ENCODE measurements at regions of chr6 and their contacts with region 1.

Region 1: GRCh38 chr6:138428944-138429598 is 25.0 kb downstream of the HEBP2 start:
- DNase-seq: peak; percentile 70
- H3K4me3 ChIP-seq: no peak overlapping the region
- H3K27ac ChIP-seq: no peak overlapping the region
- H3K4me1 ChIP-seq: no peaks in the 10 kb centered on the region
- H3K27me3 ChIP-seq: no peaks in the 10 kb centered on the region
- CTCF ChIP-seq: peak; percentile 74

Region 2: DNA sequence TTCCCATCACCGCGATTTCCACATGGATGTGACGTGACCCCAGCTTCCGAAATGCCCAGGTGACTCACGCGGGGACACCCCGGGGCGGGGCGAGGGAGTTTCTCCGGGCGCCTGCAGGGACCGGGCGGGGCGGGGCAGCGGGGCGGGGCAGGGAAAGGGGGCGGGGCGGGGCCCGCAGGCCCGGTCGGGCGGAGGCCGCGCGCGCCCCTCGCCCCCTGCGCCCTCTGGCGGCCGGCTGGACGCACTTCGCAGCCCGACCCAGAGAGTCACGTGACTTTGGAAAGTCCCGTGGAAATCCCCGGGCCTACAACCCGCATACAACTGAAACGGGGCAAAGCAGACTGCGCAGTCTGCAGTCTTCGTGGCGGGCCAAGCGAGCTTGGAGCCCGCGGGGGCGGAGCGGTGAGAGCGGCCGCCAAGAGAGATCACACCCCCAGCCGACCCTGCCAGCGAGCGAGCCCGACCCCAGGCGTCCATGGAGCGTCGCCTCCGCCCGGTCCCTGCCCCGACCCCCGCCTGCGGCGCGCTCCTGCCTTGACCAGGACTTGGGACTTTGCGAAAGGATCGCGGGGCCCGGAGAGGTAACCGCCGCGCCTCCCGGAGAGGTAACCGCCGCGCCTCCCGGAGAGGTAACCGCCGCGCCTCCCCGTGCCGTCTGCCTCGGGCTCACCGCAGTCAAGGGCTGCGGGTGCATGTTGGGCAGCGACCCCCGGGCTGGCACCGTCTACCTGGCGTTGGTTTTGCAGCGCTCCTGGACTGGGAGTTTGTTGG is 562.0 kb before region 1 on chr6 and contains the start of gene TNFAIP3:
- CTCF ChIA-PET with region 1: no interaction called
- POLR2A ChIA-PET with region 1: no interaction called
- intact Hi-C with region 1: no loop called
- DNase-seq: peak; percentile 90
- H3K4me3 ChIP-seq: peak within 1 kb of the TSS; percentile 59
- H3K27ac ChIP-seq: no peak within 1 kb of the TSS
- H3K4me1 ChIP-seq: peaks cover 8% of the 10 kb centered on the region
- H3K27me3 ChIP-seq: peaks cover 77% of the 10 kb centered on the region
- CTCF ChIP-seq: peak; percentile 62
- total RNA-seq, gene TNFAIP3: 6.2 and 12.7 TPM in 2 replicates

Region 3: DNA sequence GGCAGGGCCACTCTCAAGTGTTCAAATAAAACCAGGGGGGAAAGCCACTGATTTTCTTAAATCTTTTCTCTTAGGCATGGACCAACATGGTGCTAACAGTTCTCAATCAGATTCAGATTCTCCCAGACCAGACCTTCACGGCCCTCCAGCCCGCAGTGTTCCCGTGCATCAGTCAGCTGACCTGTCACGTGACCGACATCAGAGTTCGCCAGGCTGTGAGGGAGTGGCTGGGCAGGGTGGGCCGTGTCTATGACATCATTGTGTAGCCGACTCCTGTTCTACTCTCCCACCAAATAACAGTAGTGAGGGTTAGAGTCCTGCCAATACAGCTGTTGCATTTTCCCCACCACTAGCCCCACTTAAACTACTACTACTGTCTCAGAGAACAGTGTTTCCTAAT is 92.8 kb before region 1 on chr6:
- CTCF ChIA-PET with region 1: no interaction called
- POLR2A ChIA-PET with region 1: no interaction called
- intact Hi-C with region 1: no loop called
- DNase-seq: no peak
- H3K4me3 ChIP-seq: no peak overlapping the region
- H3K27ac ChIP-seq: no peak overlapping the region
- H3K4me1 ChIP-seq: no peaks in the 10 kb centered on the region
- H3K27me3 ChIP-seq: no peaks in the 10 kb centered on the region
- CTCF ChIP-seq: no peak

Region 4: DNA sequence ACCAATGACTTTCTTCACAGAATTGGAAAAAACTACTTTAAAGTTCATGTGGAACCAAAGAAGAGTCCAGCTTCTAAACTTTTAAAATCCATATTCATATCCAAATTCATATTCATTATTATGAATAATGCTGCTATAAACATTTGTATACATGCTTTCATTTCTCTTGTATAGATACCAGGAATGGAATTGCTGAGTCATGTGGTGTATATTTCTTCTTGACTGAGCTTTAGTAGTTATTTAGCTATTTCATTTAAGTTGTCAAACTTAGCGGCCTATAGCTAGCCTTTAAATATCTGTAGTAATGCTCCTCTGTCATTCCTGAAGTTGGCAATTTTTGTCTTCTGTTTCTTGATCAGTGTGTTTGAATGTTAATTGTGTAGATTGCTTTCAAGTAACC is 71.1 kb before region 1 on chr6:
- CTCF ChIA-PET with region 1: no interaction called
- POLR2A ChIA-PET with region 1: no interaction called
- intact Hi-C with region 1: no loop called
- DNase-seq: no peak
- H3K4me3 ChIP-seq: no peak overlapping the region
- H3K27ac ChIP-seq: no peak overlapping the region
- H3K4me1 ChIP-seq: no peaks in the 10 kb centered on the region
- H3K27me3 ChIP-seq: no peaks in the 10 kb centered on the region
- CTCF ChIP-seq: no peak

Region 5: GRCh38 chr6:138509371-138509770 is 80.3 kb after region 1 on chr6:
- CTCF ChIA-PET with region 1: interaction called, 3 read pairs
- POLR2A ChIA-PET with region 1: no interaction called
- intact Hi-C with region 1: loop called (anchors 2 kb)
- DNase-seq: peak; percentile 60
- H3K4me3 ChIP-seq: no peak overlapping the region
- H3K27ac ChIP-seq: no peak overlapping the region
- H3K4me1 ChIP-seq: peaks cover 13% of the 10 kb centered on the region
- H3K27me3 ChIP-seq: no peaks in the 10 kb centered on the region
- CTCF ChIP-seq: peak; percentile 72

Region 6: DNA sequence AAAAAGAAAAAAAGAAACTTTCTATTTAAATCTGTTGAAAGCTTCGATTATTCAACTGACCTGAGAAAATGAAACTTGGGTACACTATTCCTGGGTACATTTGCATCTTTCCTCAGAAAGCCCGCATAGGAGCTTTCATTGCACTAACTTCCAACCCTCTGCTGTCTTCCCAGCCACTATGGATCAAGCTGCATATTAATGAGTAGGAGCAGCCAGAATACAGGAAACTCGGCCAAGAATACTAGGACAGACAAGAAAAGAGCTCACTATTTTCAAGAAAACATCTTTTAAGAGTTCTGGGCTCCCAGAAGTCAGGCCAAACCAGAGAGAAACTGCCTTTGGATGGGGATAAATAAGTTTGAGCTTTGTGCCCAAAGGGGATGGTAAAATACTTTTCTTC is 209.5 kb after region 1 on chr6:
- CTCF ChIA-PET with region 1: no interaction called
- POLR2A ChIA-PET with region 1: no interaction called
- intact Hi-C with region 1: no loop called
- DNase-seq: no peak
- H3K4me3 ChIP-seq: no peak overlapping the region
- H3K27ac ChIP-seq: no peak overlapping the region
- H3K4me1 ChIP-seq: no peaks in the 10 kb centered on the region
- H3K27me3 ChIP-seq: no peaks in the 10 kb centered on the region
- CTCF ChIP-seq: no peak

Measured in A673 (cell line).